Left cardiac atrium (tissue), 4 donors: ENCODE measurements at regions of chr15 and their contacts with region 1.

Region 1: DNA sequence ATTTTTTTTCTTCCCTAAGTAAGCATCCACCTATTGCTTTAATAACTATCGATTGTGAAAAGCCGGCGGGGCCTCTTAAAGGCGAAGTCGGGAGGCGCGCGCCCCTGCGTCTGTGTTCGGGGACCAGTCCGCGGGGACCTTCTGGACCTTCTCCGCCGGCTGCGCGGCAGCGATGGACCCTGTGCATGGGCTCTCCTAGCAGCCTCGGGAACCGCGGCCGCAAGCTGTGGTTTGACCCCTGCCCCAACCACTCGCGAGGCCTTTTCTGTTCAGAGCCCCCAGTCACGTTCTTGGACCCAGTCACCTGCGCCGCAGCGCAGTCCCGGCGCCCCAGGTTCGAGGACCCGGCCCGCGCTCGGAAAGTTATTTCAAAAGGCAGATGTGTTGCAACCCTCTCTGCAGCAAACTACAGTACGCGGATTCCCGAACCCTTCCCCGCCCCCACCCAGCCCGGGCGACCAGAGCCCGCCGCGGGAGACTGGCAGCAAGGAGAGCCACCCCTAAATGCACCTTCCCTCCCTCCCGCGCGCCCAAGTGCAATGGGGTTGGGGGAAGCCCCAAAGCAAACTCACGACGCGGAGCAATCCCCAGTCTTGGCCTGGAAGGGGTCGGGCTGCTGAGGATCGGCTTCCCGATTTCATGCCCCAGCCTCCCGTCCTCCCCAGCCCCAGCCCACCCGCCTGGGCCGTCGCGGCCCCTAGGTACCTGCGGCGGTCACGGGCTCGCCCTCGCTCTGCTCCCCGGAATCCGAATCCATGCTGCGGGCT is 684 bp downstream of the TNFAIP8L3 start:
- DNase-seq: peak; percentile 55
- ATAC-seq: peak; percentile 44 to 54

Region 2: DNA sequence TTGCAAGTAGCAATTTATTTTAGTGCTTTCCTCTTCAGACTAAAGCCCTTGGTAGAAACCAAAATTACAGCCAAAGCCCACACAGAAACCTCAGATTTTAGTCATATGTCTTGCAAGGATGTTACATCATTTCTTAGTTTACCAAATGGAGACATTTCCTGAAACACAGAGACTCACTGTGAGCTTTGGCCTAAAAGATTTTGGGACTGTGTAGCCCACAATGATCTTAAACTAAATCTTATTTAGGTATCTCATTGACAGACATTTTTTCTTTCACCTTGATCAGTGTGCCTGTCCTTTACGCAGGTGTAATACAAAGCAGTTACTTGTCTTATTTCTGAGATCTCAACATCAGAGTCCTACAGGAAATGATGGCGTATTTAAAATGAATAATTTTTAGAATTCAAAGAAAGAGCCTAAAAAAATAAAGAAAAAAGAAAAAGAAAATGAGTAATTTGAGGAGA is 213.3 kb before region 1 on chr15:
- intact Hi-C with region 1: no loop called
- DNase-seq: no peak
- ATAC-seq: no peak

Region 3: DNA sequence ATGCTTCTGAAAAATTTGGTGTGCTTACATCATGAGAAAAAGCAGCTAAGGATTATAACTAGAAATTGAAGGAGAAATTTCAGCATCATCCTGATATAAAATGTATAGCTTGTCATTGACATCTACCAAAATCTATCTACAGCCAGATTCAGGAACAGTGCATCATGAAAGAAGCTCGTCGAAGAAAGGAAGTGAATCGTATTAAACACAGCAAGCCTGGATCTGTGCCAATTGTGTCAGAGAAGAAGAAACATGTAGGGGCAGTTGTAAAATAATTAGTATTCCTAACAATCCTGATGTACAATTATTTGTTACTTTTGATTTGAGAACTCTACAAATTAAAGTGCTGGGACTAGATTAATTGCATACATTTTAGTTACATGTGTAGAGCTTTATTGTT is 148.3 kb before region 1 on chr15:
- intact Hi-C with region 1: loop called in 1 of 2 experiments (anchors 10 kb)
- DNase-seq: no peak
- ATAC-seq: no peak